ENCODE measurements at regions of chr15 and their contacts with region 1.

Region 1: DNA sequence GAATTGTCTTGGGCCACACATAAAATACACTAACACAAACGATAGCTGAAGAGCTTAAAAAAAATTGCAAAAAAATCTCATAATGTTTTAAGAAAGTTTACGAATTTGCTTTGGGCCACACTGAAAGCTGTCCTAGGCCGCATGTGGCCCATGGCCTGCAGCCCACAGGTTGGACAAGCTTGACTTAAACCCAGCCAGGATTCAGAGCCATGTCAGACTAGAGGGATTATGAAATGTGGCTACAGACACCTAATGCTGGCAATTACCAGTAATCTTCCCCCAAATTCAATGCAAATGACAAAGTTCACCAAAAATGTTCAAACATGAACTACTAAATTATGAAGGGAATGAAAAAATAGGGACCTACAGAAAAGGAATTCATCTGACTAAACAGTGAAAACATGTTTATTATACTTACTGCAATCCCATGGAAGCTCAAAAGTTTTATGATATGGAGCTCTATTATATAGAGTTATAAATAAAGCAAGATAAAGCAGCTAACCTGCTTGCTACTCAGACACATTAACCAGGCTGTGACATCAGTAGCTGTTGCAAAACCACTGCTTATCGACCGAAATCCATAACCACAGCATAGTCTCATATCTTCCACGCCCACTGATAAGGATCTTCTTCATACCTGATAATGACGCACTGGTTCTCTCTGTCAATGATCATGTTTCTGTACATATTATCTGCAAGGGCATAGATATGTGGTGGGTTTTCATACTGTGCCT is 49.2 kb downstream of the LDHAL6B start:
- DNase-seq: peak; percentile 58
- H3K4me3 Mint-ChIP-seq: peak overlapping the region; percentile 22
- H3K27ac Mint-ChIP-seq: peak overlapping the region; percentile 41
- H3K4me1 Mint-ChIP-seq: peaks cover 53% of the 10 kb centered on the region
- H3K27me3 Mint-ChIP-seq: peaks cover 1% of the 10 kb centered on the region

Region 2: DNA sequence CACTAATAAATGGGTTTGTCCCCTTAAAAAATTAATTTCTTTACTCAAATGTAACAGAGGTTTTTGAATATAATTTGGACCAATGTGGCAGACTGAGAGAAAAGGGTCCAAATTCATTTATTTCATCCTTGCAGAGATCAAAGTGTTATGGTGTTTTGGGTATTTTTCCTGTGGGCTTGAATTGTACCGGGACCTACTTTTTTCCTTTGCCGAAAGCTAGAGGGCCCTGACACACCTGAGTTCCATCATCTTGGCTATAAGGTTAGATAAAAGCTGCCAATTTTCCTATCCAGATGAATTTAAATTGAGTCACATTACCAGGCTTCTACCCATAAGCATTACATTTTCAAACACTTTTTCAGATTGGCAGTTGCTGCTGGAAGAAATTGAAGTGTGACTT is 150.0 kb before region 1 on chr15:
- intact Hi-C with region 1: no loop called
- DNase-seq: no peak
- H3K4me3 Mint-ChIP-seq: peak overlapping the region; percentile 96
- H3K27ac Mint-ChIP-seq: peak overlapping the region; percentile 99
- H3K4me1 Mint-ChIP-seq: peaks cover 24% of the 10 kb centered on the region
- H3K27me3 Mint-ChIP-seq: no peaks in the 10 kb centered on the region

Region 3: DNA sequence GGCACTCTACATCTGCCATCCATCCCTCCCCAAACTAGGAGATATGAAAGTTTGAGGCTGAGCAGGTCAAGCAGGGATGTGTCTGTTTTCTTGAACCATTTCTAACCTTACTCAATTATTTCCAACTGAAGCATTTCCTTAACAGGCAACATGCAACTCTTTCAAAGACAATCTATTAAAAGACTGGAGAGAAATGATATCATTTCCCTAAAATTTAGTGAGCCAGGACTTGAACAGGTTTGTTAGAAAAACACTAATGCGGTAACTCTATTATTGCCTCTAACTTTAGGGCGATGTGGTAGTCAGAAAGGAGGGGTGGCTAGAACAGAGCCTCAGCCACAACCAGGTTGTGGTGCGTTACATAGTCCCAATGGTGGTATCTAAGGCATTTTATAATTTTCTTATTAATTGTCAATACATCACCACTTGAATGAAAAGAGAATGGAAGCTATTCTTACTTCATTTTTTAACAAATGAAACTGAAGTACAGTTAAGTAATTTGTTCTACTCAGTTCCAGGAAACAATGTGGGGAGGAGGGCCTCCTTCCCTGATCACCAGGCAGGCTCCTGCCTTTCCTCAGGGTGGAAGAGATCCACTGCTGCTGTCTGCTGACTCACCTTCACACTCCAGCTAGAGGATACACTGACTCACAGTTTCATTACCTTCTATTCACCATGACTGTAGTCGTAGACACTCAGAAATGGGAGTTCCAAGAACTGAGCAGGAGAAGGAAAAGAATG is 94.0 kb after region 1 on chr15:
- intact Hi-C with region 1: loop called (anchors 5 kb)
- DNase-seq: no peak
- H3K4me3 Mint-ChIP-seq: peak overlapping the region; percentile 27
- H3K27ac Mint-ChIP-seq: peak overlapping the region; percentile 51
- H3K4me1 Mint-ChIP-seq: peaks cover 38% of the 10 kb centered on the region
- H3K27me3 Mint-ChIP-seq: peaks cover 6% of the 10 kb centered on the region